ENCODE measurements at regions of chr12 and their contacts with region 1.

Region 1: DNA sequence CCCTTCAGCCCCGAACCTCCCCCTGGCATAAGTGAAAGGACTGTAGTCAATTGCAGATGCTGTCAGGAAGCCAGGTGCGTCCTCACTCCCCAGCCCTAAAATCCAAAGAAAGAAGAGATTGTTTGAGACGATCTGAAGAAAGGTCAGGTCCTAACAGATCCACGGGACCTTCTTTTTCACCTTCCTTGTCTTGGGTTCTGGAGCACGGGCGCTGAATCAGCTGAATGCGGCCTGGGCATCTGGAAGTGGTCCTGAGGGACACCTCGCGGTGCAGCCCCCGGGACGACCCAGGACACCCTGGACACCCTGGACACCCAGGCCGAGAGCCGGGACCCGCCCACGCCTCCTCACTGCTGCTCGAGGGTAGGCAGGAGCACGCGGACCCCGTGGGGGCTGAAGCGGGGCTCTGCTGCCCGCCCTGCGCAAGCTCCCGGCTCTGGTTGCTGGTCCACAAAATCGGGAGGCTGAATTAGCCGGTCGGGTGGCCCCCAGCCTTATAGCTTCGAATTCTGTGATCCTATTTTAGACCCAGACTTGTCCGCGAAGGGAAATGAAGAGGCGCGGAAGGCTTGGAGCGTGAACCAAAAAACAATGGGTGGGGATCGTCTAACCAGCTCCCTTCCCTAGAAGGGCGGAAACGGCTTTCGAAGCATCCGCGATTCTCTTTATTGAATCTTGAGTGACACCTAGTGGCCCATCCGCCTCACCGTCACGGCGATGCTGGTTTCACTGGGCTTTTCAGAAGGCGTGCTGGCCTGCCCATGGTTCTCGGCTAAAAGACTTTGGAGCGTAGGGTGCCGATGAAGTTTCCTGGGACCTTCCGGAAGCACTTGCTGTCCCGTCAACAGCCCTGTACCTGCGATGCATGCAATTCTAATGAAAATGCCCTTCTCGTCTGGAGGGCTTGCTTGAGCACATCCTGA is 46.4 kb upstream of the PLXNC1 start:
- DNase-seq: peak; percentile 89
- ATAC-seq: peak; percentile 93 to 94
- H3K4me3 ChIP-seq: peak overlapping the region; percentile 81
- H3K27ac ChIP-seq: no peak overlapping the region
- H3K4me1 ChIP-seq: peaks cover 16% of the 10 kb centered on the region
- H3K27me3 ChIP-seq: peaks cover 7% of the 10 kb centered on the region
- CTCF ChIP-seq: peak; percentile 88

Region 2: DNA sequence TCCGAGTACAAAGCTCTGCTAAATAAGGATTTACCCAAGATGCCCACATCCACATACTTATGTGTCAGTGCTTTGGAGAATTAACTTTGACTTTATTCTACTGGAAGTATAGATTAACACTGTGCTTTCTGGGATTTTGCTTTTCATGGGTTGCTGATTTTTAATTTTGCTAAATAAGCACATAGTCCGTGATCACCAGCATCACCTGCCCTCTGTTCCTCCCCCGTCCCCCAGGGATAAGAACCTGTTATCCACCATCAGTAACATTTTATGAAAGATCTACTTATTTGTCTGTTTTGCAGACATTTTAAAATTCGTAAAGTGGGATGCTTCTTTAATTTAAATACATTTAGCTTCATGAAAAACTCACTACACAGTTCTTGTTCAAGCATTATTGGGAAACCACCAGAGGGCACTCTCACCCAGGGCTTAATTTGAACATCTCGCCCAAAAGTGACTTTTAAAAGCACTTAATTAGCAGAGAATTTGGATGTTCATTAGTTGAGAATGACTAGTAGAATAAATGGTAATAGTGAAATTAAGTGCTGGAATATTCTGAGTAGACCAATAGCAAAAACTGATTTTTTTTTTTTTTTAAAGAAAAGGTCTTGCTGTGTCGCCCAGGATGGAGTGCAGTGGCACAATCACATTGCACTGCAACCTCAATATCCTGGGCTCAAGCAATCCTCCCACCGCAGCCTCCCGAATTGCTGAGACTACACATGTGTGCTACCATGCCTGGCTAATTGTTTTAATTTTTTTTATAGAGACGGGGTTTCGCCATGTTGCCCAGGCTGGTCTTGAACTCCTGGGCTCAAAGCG is 599.0 kb before region 1 on chr12:
- intact Hi-C with region 1: loop called (anchors 5 kb)
- DNase-seq: no peak
- ATAC-seq: peak in 1 of 2 donors; percentile 62
- H3K4me3 ChIP-seq: no peak overlapping the region
- H3K27ac ChIP-seq: no peak overlapping the region
- H3K4me1 ChIP-seq: no peaks in the 10 kb centered on the region
- H3K27me3 ChIP-seq: no peaks in the 10 kb centered on the region
- CTCF ChIP-seq: peak; percentile 84

Region 3: DNA sequence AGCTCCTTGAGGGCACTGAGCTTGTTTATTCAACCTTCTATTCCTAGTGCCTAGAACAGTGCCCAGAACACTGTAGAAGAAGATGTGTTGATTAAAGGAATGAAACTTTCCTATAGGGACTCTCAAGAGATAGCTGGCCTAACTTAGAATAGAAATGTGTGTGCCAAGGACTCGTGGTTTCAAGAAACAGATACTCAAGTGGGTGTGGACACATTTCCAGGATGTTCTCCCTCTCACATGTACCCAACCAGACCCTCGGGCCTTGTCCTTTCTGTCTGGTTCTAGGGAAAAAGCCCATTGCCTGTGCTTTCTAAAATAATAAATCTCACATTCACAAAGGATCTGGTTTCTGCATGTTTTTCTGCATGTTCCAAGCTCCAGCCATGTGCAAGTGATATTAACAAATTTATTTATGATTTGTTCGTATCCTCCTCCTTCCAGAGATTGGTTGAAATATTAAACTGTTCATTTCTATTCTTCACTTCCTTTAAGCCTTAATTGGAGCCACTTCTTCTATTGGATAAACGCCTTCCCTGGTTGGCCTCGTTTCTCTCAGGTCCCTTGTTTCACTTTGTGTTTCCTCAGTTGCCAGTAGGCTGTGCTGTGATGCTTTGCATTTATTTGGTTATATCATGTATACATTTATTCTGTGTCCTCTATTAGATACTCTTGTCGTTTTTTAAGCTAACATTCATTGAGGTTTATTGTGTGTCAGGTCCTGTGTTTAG is 335.0 kb before region 1 on chr12:
- intact Hi-C with region 1: loop called (anchors 10 kb)
- DNase-seq: no peak
- ATAC-seq: peak; percentile 80 to 93
- H3K4me3 ChIP-seq: no peak overlapping the region
- H3K27ac ChIP-seq: no peak overlapping the region
- H3K4me1 ChIP-seq: peaks cover 31% of the 10 kb centered on the region
- H3K27me3 ChIP-seq: no peaks in the 10 kb centered on the region
- CTCF ChIP-seq: peak; percentile 63

Region 4: GRCh38 chr12:93972411-93973208 is 129.4 kb before region 1 on chr12:
- intact Hi-C with region 1: no loop called
- DNase-seq: no peak
- ATAC-seq: peak; percentile 34 to 64
- H3K4me3 ChIP-seq: no peak overlapping the region
- H3K27ac ChIP-seq: no peak overlapping the region
- H3K4me1 ChIP-seq: no peaks in the 10 kb centered on the region
- H3K27me3 ChIP-seq: no peaks in the 10 kb centered on the region
- CTCF ChIP-seq: no peak

Measured in lower lobe of right lung (tissue), 2 donors.